ENCODE measurements at regions of chrX and their contacts with region 1.

Region 1: DNA sequence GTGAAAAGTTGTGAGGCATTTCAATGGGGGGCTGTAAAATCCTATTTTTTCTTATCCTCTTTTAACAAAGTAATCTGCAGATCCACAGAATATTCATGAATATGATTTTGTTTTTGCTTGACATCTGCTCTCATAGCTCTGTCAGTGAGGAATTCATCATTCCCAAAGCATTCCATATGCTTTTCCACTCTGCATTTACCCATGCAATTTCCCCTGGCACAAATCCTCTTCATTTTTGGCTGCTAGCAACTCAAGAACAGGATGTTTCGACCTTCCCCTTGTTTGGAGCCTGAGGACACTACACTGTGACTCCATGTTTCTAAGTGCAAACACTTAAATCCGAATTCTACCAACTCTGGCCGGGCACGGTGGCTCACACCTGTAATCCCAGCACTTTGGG is 48.5 kb downstream of the KLHL15 start:
- DNase-seq: no peak
- ATAC-seq: no peak
- H3K4me3 ChIP-seq: no peak overlapping the region
- H3K27ac ChIP-seq: no peak overlapping the region
- H3K4me1 ChIP-seq: peaks cover 0 to 3% of the 10 kb centered on the region in 2 experiments; a peak in 2 of 5 replicates
- H3K27me3 ChIP-seq: no peaks in the 10 kb centered on the region
- CTCF ChIP-seq: no peak
- EP300 ChIP-seq: no peak
- POLR2A ChIP-seq: no peak
- RAD21 ChIP-seq: no peak

Region 2: DNA sequence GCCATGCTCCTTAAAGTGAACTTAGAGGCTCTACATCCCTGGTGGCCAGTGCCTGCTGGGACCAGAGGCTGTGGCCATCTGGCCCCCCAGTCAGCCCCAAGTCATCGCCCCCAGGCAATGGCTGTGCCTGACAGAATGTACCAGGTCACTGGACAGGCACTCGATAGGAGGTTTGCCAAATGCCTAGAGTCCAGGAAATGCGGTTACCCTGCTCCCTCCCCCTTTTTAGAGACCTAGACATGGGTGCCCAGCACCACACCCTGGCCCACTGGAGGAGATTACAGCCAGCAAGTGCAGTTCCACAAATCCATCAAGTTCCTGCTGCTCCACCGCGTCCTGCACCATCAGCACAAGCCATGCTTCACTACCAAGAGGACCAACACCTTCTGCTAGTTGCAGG is 154.8 kb after region 1 on chrX:
- CTCF ChIA-PET with region 1: no interaction called
- POLR2A ChIA-PET with region 1: no interaction called
- in situ Hi-C with region 1: loop called (anchors 5 kb)
- intact Hi-C with region 1: no loop called
- DNase-seq: no peak
- ATAC-seq: no peak
- H3K4me3 ChIP-seq: no peak overlapping the region
- H3K27ac ChIP-seq: no peak overlapping the region
- H3K4me1 ChIP-seq: no peaks in the 10 kb centered on the region; a peak in 1 of 5 replicates
- H3K27me3 ChIP-seq: peaks cover 0 to 5% of the 10 kb centered on the region in 2 experiments; a peak in 1 of 5 replicates
- CTCF ChIP-seq: no peak
- EP300 ChIP-seq: no peak
- POLR2A ChIP-seq: no peak
- RAD21 ChIP-seq: no peak

Region 3: GRCh38 chrX:24574743-24575142 is 596.3 kb after region 1 on chrX:
- CTCF ChIA-PET with region 1: no interaction called
- POLR2A ChIA-PET with region 1: no interaction called
- in situ Hi-C with region 1: no loop called
- intact Hi-C with region 1: no loop called
- DNase-seq: no peak
- ATAC-seq: no peak
- H3K4me3 ChIP-seq: no peak overlapping the region
- H3K27ac ChIP-seq: no peak overlapping the region
- H3K4me1 ChIP-seq: no peaks in the 10 kb centered on the region
- H3K27me3 ChIP-seq: peaks cover 3 to 6% of the 10 kb centered on the region in 2 experiments; a peak in 3 of 5 replicates
- CTCF ChIP-seq: no peak
- EP300 ChIP-seq: no peak
- POLR2A ChIP-seq: no peak
- RAD21 ChIP-seq: peak in 1 of 2 experiments; percentile 22; a peak in 1 of 4 replicates